Activated CD8-positive, alpha-beta memory T cell treated with anti-CD3 and anti-CD28 coated beads, Interleukin-2, amount 10 ng/mL, durations not matched to agents 7 days and 5 days (primary cell): ENCODE measurements at regions of chr12 and their contacts with region 1.

Region 1: GRCh38 chr12:1093166-1093751 is 102.2 kb downstream of the ERC1 start:
- DNase-seq: no peak
- ATAC-seq: peak; percentile 67
- H3K4me3 Mint-ChIP-seq: no peak overlapping the region
- H3K27ac Mint-ChIP-seq: no peak overlapping the region
- H3K4me1 Mint-ChIP-seq: peaks cover 9% of the 10 kb centered on the region
- H3K27me3 Mint-ChIP-seq: no peaks in the 10 kb centered on the region

Region 2: GRCh38 chr12:1108276-1108675 is 15.0 kb after region 1 on chr12:
- CTCF ChIA-PET with region 1: interaction called, 12 read pairs
- DNase-seq: no peak
- ATAC-seq: peak; percentile 57
- H3K4me3 Mint-ChIP-seq: no peak overlapping the region
- H3K27ac Mint-ChIP-seq: no peak overlapping the region
- H3K4me1 Mint-ChIP-seq: peaks cover 18% of the 10 kb centered on the region
- H3K27me3 Mint-ChIP-seq: no peaks in the 10 kb centered on the region